Gastrocnemius medialis (tissue), 4 donors: ENCODE measurements at regions of chr16 and their contacts with region 1.

Region 1: DNA sequence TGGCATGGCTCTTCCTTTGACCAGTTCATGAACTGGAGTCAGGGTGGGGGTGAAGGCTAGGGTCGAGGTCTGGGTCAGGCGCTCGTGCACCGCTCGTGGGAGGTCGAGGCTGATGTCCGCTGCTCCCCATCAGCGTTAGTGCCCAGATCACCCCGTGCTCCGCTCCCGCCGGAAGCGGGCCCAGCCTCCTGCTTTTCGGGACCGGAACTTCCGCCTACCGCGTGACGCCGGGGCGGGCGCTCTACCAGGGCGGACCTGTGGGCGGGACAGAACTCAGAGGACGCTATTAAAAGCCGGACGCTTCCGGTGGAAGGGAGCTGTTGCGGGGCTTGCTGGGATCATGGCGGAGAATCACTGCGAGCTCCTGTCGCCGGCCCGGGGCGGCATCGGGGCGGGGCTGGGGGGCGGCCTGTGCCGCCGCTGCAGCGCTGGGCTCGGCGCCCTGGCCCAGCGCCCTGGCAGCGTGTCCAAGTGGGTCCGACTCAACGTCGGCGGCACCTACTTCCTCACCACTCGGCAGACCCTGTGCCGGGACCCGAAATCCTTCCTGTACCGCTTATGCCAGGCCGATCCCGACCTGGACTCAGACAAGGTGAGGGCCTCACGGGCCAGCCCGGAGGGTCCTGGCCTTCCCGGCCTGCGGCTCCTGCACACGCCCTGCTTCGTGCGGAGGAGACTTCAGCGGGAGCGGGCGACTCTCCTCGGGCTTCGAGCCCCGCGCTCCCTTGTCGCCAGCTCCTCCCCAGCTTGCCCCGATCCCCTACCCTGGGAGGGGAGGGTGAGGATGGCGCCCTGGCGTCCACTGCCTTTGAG is at the start of gene KCTD5:
- DNase-seq: peak; percentile 95 to 96
- ATAC-seq: peak; percentile 67 to 87
- H3K4me3 ChIP-seq: peak within 1 kb of the TSS; percentile 68 to 98 (median 78)
- H3K27ac ChIP-seq: peak within 1 kb of the TSS; percentile 82 to 95 (median 89)
- H3K4me1 ChIP-seq: peaks cover 20 to 25% of the 10 kb centered on the region in 2 donors
- H3K27me3 ChIP-seq: no peaks in the 10 kb centered on the region
- CTCF ChIP-seq: peak in 1 of 5 experiments; percentile 44
- POLR2A ChIP-seq: peak; percentile 91 to 95
- total RNA-seq, gene KCTD5: 13.6 to 23.8 (median 14.7) TPM

Region 2: DNA sequence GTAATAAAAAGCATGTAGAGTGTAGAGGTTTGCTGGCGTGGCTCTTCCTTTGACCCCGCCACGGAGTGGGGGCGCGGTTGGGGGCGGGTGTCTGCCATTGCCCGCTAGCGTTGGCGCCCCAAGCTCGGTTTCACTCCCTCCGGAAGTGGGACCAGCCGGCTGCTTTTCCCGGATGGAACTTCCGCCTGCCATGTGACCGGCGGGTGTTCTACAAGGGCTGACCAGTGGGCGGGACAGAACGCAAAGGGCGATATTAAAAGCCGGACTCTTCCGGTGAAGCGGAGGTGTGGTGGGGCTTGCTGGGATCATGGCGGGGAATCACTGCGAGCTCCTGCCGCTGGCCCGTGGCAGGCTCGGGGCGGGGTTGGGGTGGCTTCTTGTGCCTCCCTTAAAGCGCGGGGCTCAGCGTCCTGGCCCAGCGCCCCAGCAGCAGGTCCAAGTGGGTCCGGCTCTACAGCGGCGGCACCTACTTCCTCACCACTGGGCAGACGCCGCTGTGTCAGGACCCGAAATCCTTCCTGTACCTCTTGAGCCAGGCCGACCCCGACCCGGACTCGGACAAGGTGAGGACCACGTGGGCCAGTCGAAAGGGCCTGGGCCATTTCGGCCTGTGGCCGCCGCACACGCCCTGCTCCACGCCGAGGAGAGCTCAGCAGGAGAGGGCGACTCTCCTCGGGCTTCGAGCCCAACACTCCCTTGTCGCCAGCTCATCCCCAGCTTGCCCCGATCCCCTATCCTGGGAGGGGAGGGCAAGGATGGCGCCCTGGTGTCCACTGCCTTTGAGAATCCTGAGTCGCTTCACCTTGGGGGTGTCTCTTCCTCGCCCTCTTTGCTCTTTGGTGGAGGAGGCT is 79.0 kb before region 1 on chr16:
- in situ Hi-C with region 1: no loop called
- intact Hi-C with region 1: loop called (anchors 1 kb)
- DNase-seq: peak; percentile 94 to 96
- ATAC-seq: peak; percentile 77 to 90
- H3K4me3 ChIP-seq: peak overlapping the region; percentile 72 to 96 (median 90)
- H3K27ac ChIP-seq: peak overlapping the region; percentile 83 to 93 (median 88)
- H3K4me1 ChIP-seq: peaks cover 25 to 40% of the 10 kb centered on the region in 2 donors
- H3K27me3 ChIP-seq: no peaks in the 10 kb centered on the region
- CTCF ChIP-seq: no peak
- POLR2A ChIP-seq: peak; percentile 92 to 95

Region 3: GRCh38 chr16:2720719-2721633 is 38.6 kb after region 1 on chr16:
- in situ Hi-C with region 1: no loop called
- intact Hi-C with region 1: loop called (anchors 1 kb)
- DNase-seq: peak; percentile 49 to 71
- ATAC-seq: peak; percentile 86 to 89
- H3K4me3 ChIP-seq: peak overlapping the region; percentile 57 to 86 (median 66)
- H3K27ac ChIP-seq: peak overlapping the region; percentile 21 to 73 (median 63)
- H3K4me1 ChIP-seq: peaks cover 8 to 25% of the 10 kb centered on the region in 2 donors
- H3K27me3 ChIP-seq: peaks cover 0 to 5% (median under 1%) of the 10 kb centered on the region in 3 donors
- CTCF ChIP-seq: peak; percentile 37 to 99 (median 62)
- POLR2A ChIP-seq: no peak